PC-3 (cell line): ENCODE measurements at regions of chr2 and their contacts with region 1.

Region 1: DNA sequence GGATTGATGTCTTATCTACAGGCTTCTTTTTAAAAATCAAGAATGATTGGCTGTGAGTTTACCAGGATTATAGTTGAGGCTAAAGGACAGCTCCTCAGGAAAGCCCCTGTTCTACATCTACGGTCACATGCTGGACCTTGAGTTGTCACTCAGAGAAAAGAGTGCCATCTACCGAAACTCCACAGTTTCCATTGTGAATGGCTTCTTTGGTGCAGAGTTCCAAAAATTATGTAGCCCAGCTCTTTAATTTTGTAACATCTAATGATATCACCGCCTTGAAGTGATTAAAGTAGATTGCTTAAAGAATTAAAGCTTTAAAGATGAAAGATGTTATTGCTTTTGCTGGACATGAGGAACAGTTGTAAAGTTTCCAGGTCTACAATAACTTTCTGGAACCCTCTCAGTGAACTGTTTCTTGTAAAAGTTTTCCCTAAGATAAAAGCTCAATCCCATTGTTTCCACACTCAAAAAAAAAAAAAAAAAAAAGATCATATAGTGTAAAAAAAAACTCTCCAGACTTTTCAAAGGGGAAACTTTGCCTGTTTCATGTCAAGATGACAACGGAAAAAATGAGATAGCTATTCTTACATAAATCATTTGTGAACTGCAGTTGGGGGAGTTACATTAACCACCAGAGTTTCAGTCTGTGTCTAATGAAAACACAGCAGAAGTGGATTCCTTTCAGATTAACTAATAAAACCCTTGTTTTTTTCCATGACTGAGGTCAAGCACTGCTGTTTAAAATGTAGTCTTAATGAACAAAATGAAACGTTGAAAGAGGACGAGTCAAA is 4.3 kb downstream of the COL3A1 start:
- DNase-seq: peak; percentile 49
- ATAC-seq: peak; percentile 75
- H3K4me3 ChIP-seq: no peak overlapping the region
- H3K27ac ChIP-seq: no peak overlapping the region
- H3K4me1 ChIP-seq: peaks cover 12% of the 10 kb centered on the region; the same call in 1 of the 2 replicates
- H3K27me3 ChIP-seq: no peaks in the 10 kb centered on the region
- CTCF ChIP-seq: peak; percentile 78

Region 2: DNA sequence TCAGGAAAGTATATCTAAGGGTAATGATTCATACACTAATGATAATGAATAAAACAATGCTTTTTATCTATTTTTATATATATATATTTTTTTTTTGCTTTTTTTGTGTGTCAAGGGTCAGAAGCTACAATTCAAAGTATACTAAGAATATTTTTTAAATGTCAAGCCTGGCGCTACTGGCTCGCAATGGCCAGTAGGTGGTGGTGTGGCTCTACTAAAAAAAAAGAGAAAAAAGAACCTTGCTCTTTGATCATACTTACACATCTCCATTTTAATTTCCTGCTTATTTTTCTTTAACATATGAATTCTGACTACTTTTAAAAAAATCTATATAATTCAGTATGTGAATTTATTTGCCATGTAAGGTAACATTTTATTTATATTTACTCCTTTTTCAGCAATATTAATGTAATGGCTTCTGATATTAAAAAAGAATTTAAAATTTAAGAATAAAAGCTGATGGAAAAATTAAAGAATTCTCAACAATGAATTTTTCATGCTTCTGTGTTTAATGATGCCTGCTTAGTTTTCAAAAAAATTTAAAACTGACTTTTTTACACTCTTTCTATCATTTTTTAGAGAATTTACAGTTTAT is 453.9 kb before region 1 on chr2:
- CTCF ChIA-PET with region 1: interaction called, 23 read pairs
- POLR2A ChIA-PET with region 1: interaction called, 3 read pairs
- intact Hi-C with region 1: loop called (anchors 1 kb)
- DNase-seq: peak; percentile 75
- ATAC-seq: no peak
- H3K4me3 ChIP-seq: no peak overlapping the region
- H3K27ac ChIP-seq: no peak overlapping the region
- H3K4me1 ChIP-seq: peaks cover 5% of the 10 kb centered on the region; the same call in 1 of the 2 replicates
- H3K27me3 ChIP-seq: no peaks in the 10 kb centered on the region
- CTCF ChIP-seq: peak; percentile 61

Region 3: GRCh38 chr2:188598551-188598950 is 379.9 kb before region 1 on chr2:
- CTCF ChIA-PET with region 1: no interaction called
- POLR2A ChIA-PET with region 1: no interaction called
- intact Hi-C with region 1: loop called (anchors 2 kb)
- DNase-seq: no peak
- ATAC-seq: no peak
- H3K4me3 ChIP-seq: no peak overlapping the region
- H3K27ac ChIP-seq: no peak overlapping the region
- H3K4me1 ChIP-seq: peaks cover 13% of the 10 kb centered on the region
- H3K27me3 ChIP-seq: no peaks in the 10 kb centered on the region
- CTCF ChIP-seq: no peak

Region 4: DNA sequence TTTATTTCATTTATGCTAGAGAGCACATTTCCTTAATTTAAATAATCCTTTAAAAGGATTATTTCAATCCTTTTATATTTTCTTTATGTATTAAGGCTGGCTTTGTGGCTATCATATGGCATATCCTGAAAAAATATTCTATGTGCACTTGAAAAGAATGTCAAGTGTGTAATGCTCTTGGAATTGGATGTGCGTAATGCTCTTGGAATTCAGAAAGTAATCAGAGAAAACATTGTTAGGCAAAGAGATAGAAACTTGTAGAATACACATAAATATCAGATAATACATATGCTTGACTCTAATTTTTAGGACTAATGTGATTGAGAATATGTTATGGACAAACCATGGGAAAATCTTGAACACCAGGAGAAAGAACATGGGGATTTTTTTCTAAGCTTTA is 201.9 kb before region 1 on chr2:
- CTCF ChIA-PET with region 1: no interaction called
- POLR2A ChIA-PET with region 1: no interaction called
- intact Hi-C with region 1: loop called (anchors 5 kb)
- DNase-seq: peak; percentile 85
- ATAC-seq: peak; percentile 74
- H3K4me3 ChIP-seq: no peak overlapping the region
- H3K27ac ChIP-seq: peak overlapping the region; percentile 7; the same call in 1 of the 2 replicates
- H3K4me1 ChIP-seq: peaks cover 26% of the 10 kb centered on the region
- H3K27me3 ChIP-seq: no peaks in the 10 kb centered on the region
- CTCF ChIP-seq: no peak

Region 5: DNA sequence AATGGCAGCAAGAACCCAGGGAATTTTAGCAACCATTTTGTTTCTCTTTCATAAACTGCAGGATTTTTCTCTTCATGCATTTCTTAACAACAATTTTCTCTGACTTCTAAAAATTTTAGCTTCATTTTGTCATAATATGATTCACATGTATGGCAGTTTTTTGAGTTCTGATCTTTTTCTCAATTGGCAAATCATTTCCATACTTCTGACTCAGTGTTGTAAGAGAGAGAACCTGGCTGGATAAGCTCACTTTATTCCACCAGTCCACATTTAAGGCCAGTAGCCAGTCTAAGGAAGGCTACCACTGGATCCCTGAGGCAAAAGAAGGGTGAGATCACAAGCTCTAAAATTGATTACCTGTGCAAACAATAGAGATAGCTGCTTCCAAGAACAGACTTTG is 47.1 kb before region 1 on chr2:
- CTCF ChIA-PET with region 1: no interaction called
- POLR2A ChIA-PET with region 1: no interaction called
- intact Hi-C with region 1: no loop called
- DNase-seq: no peak
- ATAC-seq: no peak
- H3K4me3 ChIP-seq: no peak overlapping the region
- H3K27ac ChIP-seq: no peak overlapping the region
- H3K4me1 ChIP-seq: peaks cover 6% of the 10 kb centered on the region; the same call in 1 of the 2 replicates
- H3K27me3 ChIP-seq: no peaks in the 10 kb centered on the region
- CTCF ChIP-seq: no peak

Region 6: GRCh38 chr2:189466660-189467059 is 488.2 kb after region 1 on chr2:
- CTCF ChIA-PET with region 1: no interaction called
- POLR2A ChIA-PET with region 1: interaction called, 18 read pairs
- intact Hi-C with region 1: no loop called
- DNase-seq: peak; percentile 51
- ATAC-seq: 0 out of 2 replicates have a peak, but pooled peaks have one; percentile 40
- H3K4me3 ChIP-seq: no peak overlapping the region
- H3K27ac ChIP-seq: no peak overlapping the region
- H3K4me1 ChIP-seq: no peaks in the 10 kb centered on the region
- H3K27me3 ChIP-seq: no peaks in the 10 kb centered on the region
- CTCF ChIP-seq: peak; percentile 81